ENCODE measurements at regions of chr3 and their contacts with region 1.

Region 1: GRCh38 chr3:142828703-142829305 is 60.1 kb downstream of the PCOLCE2 start:
- DNase-seq: peak; percentile 69 to 86
- ATAC-seq: peak; percentile 99

Region 2: DNA sequence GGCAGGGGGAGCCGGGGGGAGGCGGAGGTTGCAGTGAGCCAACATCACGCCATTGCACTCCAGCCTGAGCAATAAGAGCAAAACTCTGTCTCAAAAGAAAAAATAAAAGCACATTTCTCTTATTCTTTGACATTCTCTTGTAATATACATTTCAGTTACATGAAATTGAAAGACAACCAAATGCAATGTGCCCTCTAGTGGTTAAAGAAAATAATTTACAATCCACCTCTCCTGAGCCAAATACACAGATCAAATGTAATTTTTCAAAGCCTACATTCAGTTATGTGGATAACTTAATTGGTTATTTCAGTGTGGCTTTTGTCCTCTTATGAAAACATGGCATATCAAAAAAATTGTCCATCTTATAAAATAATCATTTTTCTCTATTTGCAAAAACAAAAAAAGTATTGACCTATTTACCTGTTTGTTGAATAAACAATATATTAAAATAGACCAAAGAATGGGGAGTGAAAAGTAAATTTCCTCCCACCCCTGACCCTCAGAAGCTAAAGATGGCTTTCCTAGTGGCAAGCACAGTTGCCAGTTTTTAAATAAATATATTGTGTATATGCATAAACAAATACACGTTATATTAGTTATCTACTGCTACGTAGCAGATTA is 158.4 kb after region 1 on chr3:
- intact Hi-C with region 1: loop called in 1 of 2 experiments (anchors 5 kb)
- DNase-seq: no peak
- ATAC-seq: peak; percentile 36